ENCODE measurements at regions of chr5 and their contacts with region 1.

Region 1: GRCh38 chr5:56686337-56687195 is 128.8 kb upstream of the MAP3K1 start:
- DNase-seq: peak in 2 of 14 experiments; percentile 22 to 59
- ATAC-seq: peak; percentile 65
- H3K4me3 ChIP-seq: no peak overlapping the region
- H3K4me3 Mint-ChIP-seq: peak overlapping the region; percentile 61
- H3K27ac ChIP-seq: peak overlapping the region in 1 of 2 donors; percentile 30
- H3K27ac Mint-ChIP-seq: peak overlapping the region; percentile 82
- H3K4me1 ChIP-seq: peaks cover 64% of the 10 kb centered on the region
- H3K4me1 Mint-ChIP-seq: peaks cover 100% of the 10 kb centered on the region
- H3K27me3 ChIP-seq: no peaks in the 10 kb centered on the region
- H3K27me3 Mint-ChIP-seq: no peaks in the 10 kb centered on the region
- CTCF ChIP-seq: no peak

Region 2: GRCh38 chr5:56396634-56397033 is 289.9 kb before region 1 on chr5:
- CTCF ChIA-PET with region 1: no interaction called
- POLR2A ChIA-PET with region 1: no interaction called
- intact Hi-C with region 1: no loop called
- DNase-seq: no peak
- ATAC-seq: no peak
- H3K4me3 ChIP-seq: no peak overlapping the region
- H3K4me3 Mint-ChIP-seq: no peak overlapping the region
- H3K27ac ChIP-seq: no peak overlapping the region
- H3K27ac Mint-ChIP-seq: no peak overlapping the region
- H3K4me1 ChIP-seq: no peaks in the 10 kb centered on the region
- H3K4me1 Mint-ChIP-seq: no peaks in the 10 kb centered on the region
- H3K27me3 ChIP-seq: no peaks in the 10 kb centered on the region
- H3K27me3 Mint-ChIP-seq: no peaks in the 10 kb centered on the region
- CTCF ChIP-seq: no peak

Region 3: GRCh38 chr5:56481428-56482357 is 204.9 kb before region 1 on chr5:
- CTCF ChIA-PET with region 1: no interaction called
- POLR2A ChIA-PET with region 1: interaction called, 27 read pairs
- intact Hi-C with region 1: loop called in 1 of 2 experiments (anchors 10 kb)
- DNase-seq: peak in 9 of 14 experiments; percentile 8 to 58 (median 31)
- ATAC-seq: no peak
- H3K4me3 ChIP-seq: peak overlapping the region; percentile 69
- H3K4me3 Mint-ChIP-seq: peak overlapping the region; percentile 94
- H3K27ac ChIP-seq: peak overlapping the region; percentile 80
- H3K27ac Mint-ChIP-seq: peak overlapping the region; percentile 89
- H3K4me1 ChIP-seq: peaks cover 52% of the 10 kb centered on the region
- H3K4me1 Mint-ChIP-seq: peaks cover 49% of the 10 kb centered on the region
- H3K27me3 ChIP-seq: no peaks in the 10 kb centered on the region
- H3K27me3 Mint-ChIP-seq: no peaks in the 10 kb centered on the region
- CTCF ChIP-seq: peak; percentile 46

Region 4: GRCh38 chr5:56615361-56616153 is 71.0 kb before region 1 on chr5:
- CTCF ChIA-PET with region 1: no interaction called
- POLR2A ChIA-PET with region 1: interaction called, 13 read pairs
- intact Hi-C with region 1: no loop called
- DNase-seq: peak in 1 of 14 experiments; percentile 15
- ATAC-seq: peak; percentile 25
- H3K4me3 ChIP-seq: no peak overlapping the region
- H3K4me3 Mint-ChIP-seq: peak overlapping the region; percentile 52
- H3K27ac ChIP-seq: peak overlapping the region in 1 of 2 donors; percentile 0
- H3K27ac Mint-ChIP-seq: peak overlapping the region; percentile 82
- H3K4me1 ChIP-seq: peaks cover 43% of the 10 kb centered on the region
- H3K4me1 Mint-ChIP-seq: peaks cover 65% of the 10 kb centered on the region
- H3K27me3 ChIP-seq: no peaks in the 10 kb centered on the region
- H3K27me3 Mint-ChIP-seq: no peaks in the 10 kb centered on the region
- CTCF ChIP-seq: no peak

Region 5: GRCh38 chr5:56670118-56670483 is 16.5 kb before region 1 on chr5:
- CTCF ChIA-PET with region 1: no interaction called
- POLR2A ChIA-PET with region 1: interaction called, 43 read pairs
- intact Hi-C with region 1: no loop called
- DNase-seq: peak in 9 of 14 experiments; percentile 10 to 84 (median 23)
- ATAC-seq: peak; percentile 84
- H3K4me3 ChIP-seq: no peak overlapping the region
- H3K4me3 Mint-ChIP-seq: peak overlapping the region; percentile 36
- H3K27ac ChIP-seq: peak overlapping the region; percentile 57 to 70
- H3K27ac Mint-ChIP-seq: peak overlapping the region; percentile 79
- H3K4me1 ChIP-seq: peaks cover 39% of the 10 kb centered on the region
- H3K4me1 Mint-ChIP-seq: peaks cover 32% of the 10 kb centered on the region
- H3K27me3 ChIP-seq: no peaks in the 10 kb centered on the region
- H3K27me3 Mint-ChIP-seq: no peaks in the 10 kb centered on the region
- CTCF ChIP-seq: no peak

Region 6: GRCh38 chr5:56696900-56697299 is 10.3 kb after region 1 on chr5:
- CTCF ChIA-PET with region 1: no interaction called
- POLR2A ChIA-PET with region 1: interaction called, 41 read pairs
- intact Hi-C with region 1: no loop called
- DNase-seq: peak in 6 of 14 experiments; percentile 20 to 75 (median 44)
- ATAC-seq: no peak
- H3K4me3 ChIP-seq: no peak overlapping the region
- H3K4me3 Mint-ChIP-seq: peak overlapping the region; percentile 26
- H3K27ac ChIP-seq: no peak overlapping the region
- H3K27ac Mint-ChIP-seq: peak overlapping the region; percentile 78
- H3K4me1 ChIP-seq: peaks cover 74% of the 10 kb centered on the region
- H3K4me1 Mint-ChIP-seq: peaks cover 97% of the 10 kb centered on the region
- H3K27me3 ChIP-seq: no peaks in the 10 kb centered on the region
- H3K27me3 Mint-ChIP-seq: no peaks in the 10 kb centered on the region
- CTCF ChIP-seq: no peak

Region 7: GRCh38 chr5:56827049-56827448 is 140.5 kb after region 1 on chr5:
- CTCF ChIA-PET with region 1: no interaction called
- POLR2A ChIA-PET with region 1: interaction called, 12 read pairs
- intact Hi-C with region 1: no loop called
- DNase-seq: peak in 3 of 14 experiments; percentile 51 to 62 (median 53)
- ATAC-seq: peak; percentile 27
- H3K4me3 ChIP-seq: no peak overlapping the region
- H3K4me3 Mint-ChIP-seq: peak overlapping the region; percentile 54
- H3K27ac ChIP-seq: no peak overlapping the region
- H3K27ac Mint-ChIP-seq: peak overlapping the region; percentile 94
- H3K4me1 ChIP-seq: peaks cover 70% of the 10 kb centered on the region
- H3K4me1 Mint-ChIP-seq: peaks cover 97% of the 10 kb centered on the region
- H3K27me3 ChIP-seq: no peaks in the 10 kb centered on the region
- H3K27me3 Mint-ChIP-seq: no peaks in the 10 kb centered on the region
- CTCF ChIP-seq: peak; percentile 14